Common myeloid progenitor, CD34-positive (primary cell): ENCODE measurements at regions of chr1 and their contacts with region 1.

Region 1: GRCh38 chr1:151881456-151881855 is 27.9 kb downstream of the THEM4 start:
- DNase-seq: peak; percentile 14 to 46 (median 40)
- H3K4me3 ChIP-seq: no peak overlapping the region
- H3K27ac ChIP-seq: no peak overlapping the region
- H3K4me1 ChIP-seq: no peaks in the 10 kb centered on the region
- H3K27me3 ChIP-seq: no peaks in the 10 kb centered on the region

Region 2: DNA sequence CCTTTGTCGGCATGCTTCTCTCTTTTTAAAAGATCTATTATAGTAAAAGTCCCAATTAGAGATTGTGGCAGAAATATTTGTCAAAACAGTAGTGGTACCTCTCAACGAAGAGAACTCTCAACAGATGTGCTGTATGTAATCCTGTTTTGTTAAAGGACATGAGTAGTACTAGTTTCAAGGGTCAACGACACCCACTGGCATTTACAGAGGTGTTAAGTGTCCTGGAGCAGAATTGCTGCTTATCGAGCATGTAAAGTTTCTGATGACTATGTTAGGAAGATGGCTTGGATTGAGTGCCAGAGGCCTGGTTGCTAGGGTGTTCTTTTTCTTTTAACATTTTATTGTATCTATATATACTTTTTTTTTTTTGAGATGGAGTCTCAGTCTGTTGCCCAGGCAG is 192.0 kb before region 1 on chr1:
- CTCF ChIA-PET with region 1: no interaction called
- POLR2A ChIA-PET with region 1: no interaction called
- DNase-seq: no peak
- H3K4me3 ChIP-seq: no peak overlapping the region
- H3K27ac ChIP-seq: no peak overlapping the region
- H3K4me1 ChIP-seq: peaks cover 0 to 10% (median 8%) of the 10 kb centered on the region in 4 experiments
- H3K27me3 ChIP-seq: no peaks in the 10 kb centered on the region

Region 3: GRCh38 chr1:151858030-151858691 is 23.3 kb before region 1 on chr1:
- CTCF ChIA-PET with region 1: interaction called, 10 read pairs
- POLR2A ChIA-PET with region 1: no interaction called
- DNase-seq: no peak
- H3K4me3 ChIP-seq: no peak overlapping the region
- H3K27ac ChIP-seq: no peak overlapping the region
- H3K4me1 ChIP-seq: peaks cover 0 to 24% (median 2%) of the 10 kb centered on the region in 4 experiments
- H3K27me3 ChIP-seq: no peaks in the 10 kb centered on the region

Region 4: DNA sequence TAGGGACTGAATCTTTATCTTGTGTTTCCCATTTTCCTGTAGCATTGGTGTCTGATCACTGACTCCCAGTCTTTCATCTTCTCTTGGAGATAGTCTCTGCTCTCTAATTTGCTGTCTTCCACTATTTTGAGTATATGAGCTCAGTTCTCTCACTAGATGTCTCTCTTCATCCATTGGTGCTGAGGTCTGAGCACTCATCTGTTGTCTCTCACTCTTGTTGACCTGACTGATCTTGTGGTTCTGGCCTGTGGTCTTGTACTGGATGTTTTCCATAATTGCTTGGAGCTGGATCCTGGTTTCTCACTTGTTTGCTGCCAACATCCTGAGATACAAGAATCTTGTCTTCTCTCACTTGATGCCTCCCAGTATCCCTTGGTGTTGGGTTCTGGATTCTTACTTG is 180.5 kb after region 1 on chr1:
- CTCF ChIA-PET with region 1: no interaction called
- POLR2A ChIA-PET with region 1: no interaction called
- DNase-seq: no peak
- H3K4me3 ChIP-seq: no peak overlapping the region
- H3K27ac ChIP-seq: no peak overlapping the region
- H3K4me1 ChIP-seq: no peaks in the 10 kb centered on the region
- H3K27me3 ChIP-seq: peaks cover 3 to 40% (median 21%) of the 10 kb centered on the region in 5 experiments